ENCODE measurements at regions of chr7 and their contacts with region 1.

Region 1: GRCh38 chr7:72243329-72243728 is 168.8 kb downstream of the CALN1 start:
- DNase-seq: no peak
- ATAC-seq: no peak
- H3K4me3 ChIP-seq: no peak overlapping the region
- H3K4me3 Mint-ChIP-seq: no peak overlapping the region
- H3K27ac ChIP-seq: no peak overlapping the region
- H3K27ac Mint-ChIP-seq: no peak overlapping the region
- H3K4me1 ChIP-seq: no peaks in the 10 kb centered on the region
- H3K4me1 Mint-ChIP-seq: no peaks in the 10 kb centered on the region
- H3K27me3 ChIP-seq: no peaks in the 10 kb centered on the region
- H3K27me3 Mint-ChIP-seq: no peaks in the 10 kb centered on the region
- CTCF ChIP-seq: no peak

Region 2: GRCh38 chr7:72190919-72191318 is 52.4 kb before region 1 on chr7:
- CTCF ChIA-PET with region 1: no interaction called
- POLR2A ChIA-PET with region 1: no interaction called
- intact Hi-C with region 1: no loop called
- DNase-seq: no peak
- ATAC-seq: no peak
- H3K4me3 ChIP-seq: no peak overlapping the region
- H3K4me3 Mint-ChIP-seq: no peak overlapping the region
- H3K27ac ChIP-seq: no peak overlapping the region
- H3K27ac Mint-ChIP-seq: no peak overlapping the region
- H3K4me1 ChIP-seq: no peaks in the 10 kb centered on the region
- H3K4me1 Mint-ChIP-seq: no peaks in the 10 kb centered on the region
- H3K27me3 ChIP-seq: no peaks in the 10 kb centered on the region
- H3K27me3 Mint-ChIP-seq: no peaks in the 10 kb centered on the region
- CTCF ChIP-seq: no peak

Region 3: GRCh38 chr7:72268796-72269195 is 25.5 kb after region 1 on chr7:
- CTCF ChIA-PET with region 1: no interaction called
- POLR2A ChIA-PET with region 1: no interaction called
- intact Hi-C with region 1: loop called in 1 of 2 experiments (anchors 2 kb)
- DNase-seq: no peak
- ATAC-seq: no peak
- H3K4me3 ChIP-seq: no peak overlapping the region
- H3K4me3 Mint-ChIP-seq: no peak overlapping the region
- H3K27ac ChIP-seq: no peak overlapping the region
- H3K27ac Mint-ChIP-seq: no peak overlapping the region
- H3K4me1 ChIP-seq: no peaks in the 10 kb centered on the region
- H3K4me1 Mint-ChIP-seq: no peaks in the 10 kb centered on the region
- H3K27me3 ChIP-seq: no peaks in the 10 kb centered on the region
- H3K27me3 Mint-ChIP-seq: no peaks in the 10 kb centered on the region
- CTCF ChIP-seq: no peak

Measured in CD8-positive, alpha-beta T cell (primary cell).